SK-N-SH (cell line): ENCODE measurements at regions of chr5 and their contacts with region 1.

Region 1: DNA sequence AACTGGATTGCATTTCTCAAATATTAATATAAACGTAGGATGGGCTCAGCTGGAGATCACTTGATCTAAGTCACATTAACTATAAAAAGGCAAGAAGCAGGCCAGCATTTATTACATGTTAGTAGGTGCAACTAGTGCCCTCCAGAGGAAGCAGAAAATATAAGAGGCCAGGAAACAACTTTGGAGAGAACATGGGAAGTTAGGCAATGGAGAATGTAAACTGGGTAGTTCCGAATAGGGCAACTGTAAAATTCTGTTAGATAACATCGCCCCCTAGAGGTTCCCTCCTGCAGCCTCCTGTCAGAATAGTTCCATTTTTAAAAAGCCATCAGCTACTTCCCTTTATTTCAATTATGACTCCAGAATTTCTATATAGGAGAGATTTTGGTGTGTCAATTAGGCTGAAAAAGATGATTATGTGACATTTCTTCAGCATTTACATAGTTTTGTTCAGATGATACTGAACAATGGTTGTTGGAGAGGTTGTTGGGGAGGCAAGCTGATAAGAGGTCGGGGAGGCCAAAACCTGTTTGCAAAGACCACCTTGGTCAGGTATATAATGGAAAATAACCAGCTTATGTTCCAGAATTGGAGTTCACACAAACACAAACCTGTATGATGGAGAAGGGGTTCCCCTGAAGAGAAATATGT is 22.4 kb downstream of the CCL28 start:
- DNase-seq: peak; percentile 76
- H3K4me3 ChIP-seq: peak overlapping the region in 1 of 2 experiments; percentile 3; a peak in 1 of 4 replicates
- H3K27ac ChIP-seq: no peak overlapping the region
- H3K4me1 ChIP-seq: no peaks in the 10 kb centered on the region
- H3K27me3 ChIP-seq: peaks cover 13% of the 10 kb centered on the region
- CTCF ChIP-seq: peak; percentile 90
- EP300 ChIP-seq: no peak
- RAD21 ChIP-seq: peak; percentile 85

Region 2: GRCh38 chr5:43110606-43111442 is 279.0 kb before region 1 on chr5:
- CTCF ChIA-PET with region 1: interaction called, 10 read pairs
- POLR2A ChIA-PET with region 1: no interaction called
- DNase-seq: peak; percentile 32
- H3K4me3 ChIP-seq: no peak overlapping the region
- H3K27ac ChIP-seq: no peak overlapping the region
- H3K4me1 ChIP-seq: no peaks in the 10 kb centered on the region
- H3K27me3 ChIP-seq: no peaks in the 10 kb centered on the region
- CTCF ChIP-seq: peak; percentile 30; the same call in 1 of the 2 replicates
- EP300 ChIP-seq: no peak
- RAD21 ChIP-seq: no peak

Region 3: DNA sequence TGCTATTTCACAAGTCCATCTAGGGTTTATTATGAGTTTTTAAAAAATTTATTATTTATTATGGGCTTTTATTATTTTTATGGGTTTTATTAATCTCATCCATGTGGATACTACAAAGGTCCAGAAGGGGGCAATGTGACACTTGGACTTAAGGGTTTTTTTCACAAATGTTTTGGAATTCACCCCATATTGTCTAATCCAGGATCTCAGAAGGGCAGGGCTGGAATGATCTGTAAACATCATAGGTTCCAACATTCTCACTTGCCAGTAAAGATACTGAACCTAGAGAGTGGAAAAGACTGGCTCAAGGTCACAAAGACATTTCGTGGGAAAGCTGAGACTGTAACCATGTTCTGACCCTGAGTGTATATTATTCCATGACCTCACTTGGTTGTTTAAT is 162.1 kb before region 1 on chr5:
- CTCF ChIA-PET with region 1: interaction called, 34 read pairs
- POLR2A ChIA-PET with region 1: no interaction called
- DNase-seq: peak; percentile 52
- H3K4me3 ChIP-seq: no peak overlapping the region; a peak in 1 of 4 replicates
- H3K27ac ChIP-seq: no peak overlapping the region
- H3K4me1 ChIP-seq: no peaks in the 10 kb centered on the region
- H3K27me3 ChIP-seq: no peaks in the 10 kb centered on the region
- CTCF ChIP-seq: peak; percentile 69
- EP300 ChIP-seq: no peak
- RAD21 ChIP-seq: peak; percentile 76

Region 4: DNA sequence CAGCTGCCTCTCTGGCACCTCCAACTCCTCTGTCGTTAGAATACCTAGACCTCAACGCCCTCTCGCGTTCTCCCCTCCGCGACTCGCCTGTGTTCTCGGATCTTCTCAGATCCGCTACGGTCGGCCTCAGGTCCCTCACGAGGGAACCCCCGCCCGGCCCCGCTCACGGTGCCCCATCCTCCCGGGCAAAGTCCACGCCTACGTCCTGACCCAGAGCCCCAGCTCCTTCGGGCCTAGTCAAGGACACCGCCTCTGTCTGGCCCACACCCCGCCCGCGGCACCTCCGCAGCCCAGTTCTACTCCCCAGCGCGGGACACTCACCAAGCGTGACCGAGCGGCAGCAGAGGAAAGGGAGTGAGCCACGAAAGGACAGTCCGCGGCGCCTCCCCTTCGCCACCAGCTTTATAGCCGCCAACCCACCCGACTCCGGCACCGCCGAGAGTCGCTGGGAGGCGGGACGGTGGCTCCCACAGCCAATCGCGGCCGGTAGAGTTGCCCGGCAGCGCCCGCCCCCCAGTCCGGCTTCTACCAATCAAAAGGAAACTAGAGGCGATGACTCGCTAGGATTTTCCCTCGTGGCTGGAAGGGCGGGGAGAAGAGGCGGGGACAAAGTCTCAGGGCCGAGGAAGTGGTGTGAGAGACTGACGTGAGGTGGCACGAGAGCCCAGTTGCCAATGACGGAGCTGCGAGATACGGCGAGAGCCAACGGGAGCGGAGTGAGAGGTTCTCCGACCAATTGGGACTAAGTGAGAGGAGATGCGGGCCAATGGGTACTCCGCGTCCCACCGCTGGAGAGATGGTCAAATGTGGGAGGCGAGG is 76.6 kb before region 1 on chr5 and contains the start of gene HMGCS1:
- CTCF ChIA-PET with region 1: interaction called, 20 read pairs
- POLR2A ChIA-PET with region 1: no interaction called
- DNase-seq: peak; percentile 94
- H3K4me3 ChIP-seq: peak within 1 kb of the TSS; percentile 79 to 92
- H3K27ac ChIP-seq: peak within 1 kb of the TSS; percentile 81 to 88
- H3K4me1 ChIP-seq: peaks cover 13 to 22% of the 10 kb centered on the region in 2 experiments; a peak in 3 of 4 replicates
- H3K27me3 ChIP-seq: peaks cover 3% of the 10 kb centered on the region; the same call in 1 of the 2 replicates
- CTCF ChIP-seq: peak; percentile 13; the same call in 1 of the 2 replicates
- EP300 ChIP-seq: no peak
- RAD21 ChIP-seq: 0 out of 2 replicates have a peak, but pooled peaks have one; percentile 6
- polyA plus RNA-seq, gene HMGCS1: 8.2 and 11.3 TPM in 2 replicates

Region 5: DNA sequence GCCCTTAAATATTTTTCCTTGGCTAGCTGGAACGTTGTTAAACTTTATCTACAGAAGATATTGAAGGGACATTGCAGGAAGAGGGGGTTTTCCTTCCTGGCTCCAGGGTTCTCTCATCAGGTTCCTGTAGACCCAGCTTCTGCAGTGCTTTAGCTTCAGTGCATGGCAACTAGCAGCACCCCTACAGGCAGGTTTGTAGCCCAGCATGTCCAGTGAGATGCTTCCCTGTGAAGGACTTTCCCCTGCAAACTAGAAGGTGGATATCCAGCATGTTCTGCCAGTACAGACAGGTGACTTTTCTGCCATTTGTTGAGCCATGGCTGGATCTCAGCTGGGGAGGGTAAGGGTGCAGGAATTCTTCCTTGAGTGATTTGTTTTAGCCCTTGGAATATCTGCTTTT is 12.0 kb after region 1 on chr5:
- CTCF ChIA-PET with region 1: interaction called, 16 read pairs
- POLR2A ChIA-PET with region 1: no interaction called
- DNase-seq: peak; percentile 51
- H3K4me3 ChIP-seq: no peak overlapping the region
- H3K27ac ChIP-seq: no peak overlapping the region
- H3K4me1 ChIP-seq: no peaks in the 10 kb centered on the region; a peak in 1 of 4 replicates
- H3K27me3 ChIP-seq: peaks cover 10% of the 10 kb centered on the region; the same call in 1 of the 2 replicates
- CTCF ChIP-seq: no peak; the same call in 1 of the 2 replicates
- EP300 ChIP-seq: no peak
- RAD21 ChIP-seq: no peak